Ovary (tissue), 10 donors: ENCODE measurements at regions of chr4 and their contacts with region 1.

Region 1: DNA sequence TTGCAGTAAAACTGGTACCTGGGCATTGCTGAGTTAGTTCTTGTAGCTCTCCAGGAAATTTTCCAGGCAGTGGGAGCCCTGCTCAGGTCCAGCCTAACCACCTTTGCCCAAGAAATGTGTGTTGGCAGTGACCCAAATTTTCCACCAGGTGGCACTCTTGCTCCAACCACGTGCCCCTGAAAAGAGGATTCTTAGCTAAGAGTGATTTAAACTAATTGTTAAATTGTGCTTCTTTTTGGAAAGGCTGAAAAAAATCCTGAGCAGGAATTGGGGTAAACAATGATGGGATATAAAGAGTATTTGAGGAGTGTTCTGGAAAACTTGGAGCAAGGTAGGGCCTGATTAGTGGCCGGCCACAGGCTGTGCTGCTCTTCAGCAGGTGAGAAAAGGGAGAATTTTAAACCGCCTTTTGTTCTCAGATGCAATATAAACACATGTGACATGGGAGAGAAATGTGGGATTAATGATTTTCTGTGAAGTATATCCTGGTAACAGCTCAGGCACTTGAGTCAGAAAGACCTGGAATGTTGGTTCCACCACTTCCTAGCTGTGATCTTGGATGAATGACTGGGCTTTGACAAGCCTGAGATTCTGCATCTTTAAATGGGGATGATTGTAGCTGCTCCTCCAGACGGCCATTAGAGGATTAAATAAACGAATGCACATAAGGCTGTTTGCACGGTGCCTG is 219.6 kb downstream of the PTTG2 start:
- DNase-seq: peak; percentile 60 to 77 (median 70)
- H3K4me3 ChIP-seq: no peak overlapping the region
- H3K27ac ChIP-seq: no peak overlapping the region
- H3K4me1 ChIP-seq: peaks cover 4% of the 10 kb centered on the region
- H3K27me3 ChIP-seq: no peaks in the 10 kb centered on the region
- CTCF ChIP-seq: peak; percentile 52 to 82 (median 66)
- EP300 ChIP-seq: no peak
- POLR2A ChIP-seq: no peak

Region 2: DNA sequence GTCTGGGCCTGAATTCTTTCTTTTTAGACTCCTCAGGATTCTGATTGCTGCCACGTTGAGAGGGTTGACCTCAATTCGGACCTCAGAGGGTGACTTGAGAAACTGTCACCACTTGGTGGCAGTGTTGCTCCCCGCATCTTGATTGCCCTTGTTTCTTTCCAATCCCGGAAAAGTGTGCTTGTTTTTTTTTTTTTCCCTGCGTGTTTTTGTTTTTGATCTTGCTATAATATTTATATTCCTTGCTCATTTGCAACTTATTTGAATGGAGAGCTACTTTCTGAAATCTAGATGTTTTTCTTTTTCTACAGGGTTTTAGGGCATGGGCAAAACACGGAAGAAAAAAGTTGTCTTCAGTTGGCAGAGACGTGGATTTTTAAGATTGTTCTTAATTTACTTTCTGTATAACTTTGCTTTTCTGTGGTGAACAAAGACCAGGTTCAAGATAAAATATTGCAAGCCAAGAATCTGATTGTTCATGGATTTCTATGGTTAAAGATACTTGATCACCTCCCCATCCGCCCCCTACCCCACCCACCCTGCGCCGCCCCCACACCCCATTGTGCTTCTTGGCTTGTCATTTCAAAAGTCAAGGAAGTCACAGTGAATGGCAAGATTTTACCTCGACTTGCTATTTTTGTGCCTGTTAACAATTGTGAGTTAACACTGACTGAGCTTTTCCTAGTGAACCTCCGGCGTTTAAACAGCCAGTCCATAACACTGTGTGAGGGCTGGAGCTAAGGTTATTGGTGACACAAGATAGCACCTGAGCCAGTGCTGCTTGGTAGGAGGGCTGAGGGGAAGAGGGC is 117.5 kb before region 1 on chr4:
- intact Hi-C with region 1: loop called in 2 of 4 experiments (anchors 5 to 10 kb)
- DNase-seq: peak; percentile 68 to 88 (median 84)
- H3K4me3 ChIP-seq: peak overlapping the region; percentile 25
- H3K27ac ChIP-seq: peak overlapping the region in 1 of 2 donors; percentile 47
- H3K4me1 ChIP-seq: peaks cover 3% of the 10 kb centered on the region
- H3K27me3 ChIP-seq: no peaks in the 10 kb centered on the region
- CTCF ChIP-seq: peak; percentile 61 to 78 (median 64)
- EP300 ChIP-seq: no peak
- POLR2A ChIP-seq: no peak

Region 3: DNA sequence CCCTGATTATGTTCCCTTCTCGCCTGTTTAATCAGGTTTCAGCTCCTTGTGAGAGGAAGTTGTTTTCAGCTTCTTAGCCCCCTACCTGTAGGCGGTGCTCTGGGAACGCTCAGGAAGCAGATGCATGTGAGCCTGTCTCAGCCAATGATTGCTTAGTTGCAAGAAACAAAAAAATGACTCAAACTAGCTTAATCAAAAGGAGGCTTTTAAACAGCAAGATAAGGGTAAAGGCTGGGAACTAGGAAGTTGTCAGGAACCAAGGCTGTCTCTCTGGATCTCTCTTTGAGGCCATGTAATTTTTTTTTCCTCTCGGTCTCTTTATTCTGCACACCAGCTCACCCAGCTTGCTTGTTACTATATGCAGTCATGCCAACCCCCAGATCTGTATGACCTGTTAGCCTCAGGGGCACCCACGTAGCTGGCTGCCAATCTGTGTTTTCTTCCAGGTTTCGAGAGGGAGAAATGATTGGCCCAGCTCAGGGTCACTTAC is 110.5 kb before region 1 on chr4:
- intact Hi-C with region 1: loop called in 2 of 4 experiments (anchors 5 to 10 kb)
- DNase-seq: peak; percentile 73 to 81 (median 78)
- H3K4me3 ChIP-seq: no peak overlapping the region
- H3K27ac ChIP-seq: peak overlapping the region; percentile 48 to 74
- H3K4me1 ChIP-seq: peaks cover 7% of the 10 kb centered on the region
- H3K27me3 ChIP-seq: no peaks in the 10 kb centered on the region
- CTCF ChIP-seq: peak; percentile 52 to 89 (median 75)
- EP300 ChIP-seq: no peak
- POLR2A ChIP-seq: no peak

Region 4: GRCh38 chr4:38319456-38320342 is 139.9 kb after region 1 on chr4:
- intact Hi-C with region 1: loop called in 2 of 4 experiments (anchors 10 kb)
- DNase-seq: peak; percentile 92 to 99 (median 98)
- H3K4me3 ChIP-seq: no peak overlapping the region
- H3K27ac ChIP-seq: peak overlapping the region; percentile 65 to 78
- H3K4me1 ChIP-seq: peaks cover 5% of the 10 kb centered on the region
- H3K27me3 ChIP-seq: no peaks in the 10 kb centered on the region
- CTCF ChIP-seq: peak; percentile 91 to 93 (median 92)
- EP300 ChIP-seq: no peak
- POLR2A ChIP-seq: no peak

Region 5: DNA sequence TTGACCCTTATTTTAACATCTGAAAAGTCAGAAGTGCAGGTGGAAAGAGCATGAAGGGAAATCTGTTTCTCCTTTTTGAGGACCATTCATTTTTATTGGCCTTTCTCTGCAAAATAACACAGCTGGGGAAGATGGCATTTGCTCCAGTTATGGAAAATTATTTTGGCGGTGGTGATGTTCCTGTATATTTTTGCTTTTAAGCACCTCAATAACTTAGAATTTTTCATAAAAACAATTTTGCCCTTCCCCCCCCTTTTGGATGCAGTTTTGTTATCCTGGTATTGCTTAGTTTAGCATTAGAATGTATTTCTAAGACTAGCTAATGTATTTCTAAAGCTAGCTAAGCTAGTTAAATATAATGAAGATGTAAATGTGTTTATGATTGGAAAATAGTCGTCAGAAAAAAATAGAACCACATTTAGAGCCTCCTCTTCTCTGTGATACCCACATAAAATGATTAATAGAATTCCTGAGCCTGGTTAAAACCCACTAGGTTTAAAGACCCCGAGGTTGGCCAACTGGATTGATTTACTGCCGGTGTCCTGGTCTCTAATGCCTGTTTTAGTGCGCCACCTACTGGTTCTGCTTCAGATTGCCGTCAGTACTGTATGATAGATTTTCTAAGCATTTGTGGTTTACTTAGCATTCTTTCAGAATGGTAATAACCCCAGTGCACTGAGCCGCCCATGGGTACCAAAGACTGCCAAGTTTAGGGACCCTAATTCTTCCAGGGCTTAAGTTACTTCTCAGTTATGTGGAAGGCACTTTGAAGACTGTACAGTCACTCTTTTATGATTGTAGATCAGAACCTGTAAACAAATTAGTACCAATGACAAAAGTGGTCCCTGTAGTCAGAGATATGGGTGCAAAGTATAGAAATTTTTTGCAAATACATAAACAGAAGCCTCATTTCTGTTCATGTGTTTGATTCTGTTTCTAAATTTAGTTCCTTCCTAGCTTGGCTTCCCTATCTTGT is 495.6 kb after region 1 on chr4:
- intact Hi-C with region 1: loop called (anchors 5 to 10 kb)
- DNase-seq: peak; percentile 72 to 87 (median 74)
- H3K4me3 ChIP-seq: no peak overlapping the region
- H3K27ac ChIP-seq: peak overlapping the region in 1 of 2 donors; percentile 84
- H3K4me1 ChIP-seq: peaks cover 35% of the 10 kb centered on the region
- H3K27me3 ChIP-seq: no peaks in the 10 kb centered on the region
- CTCF ChIP-seq: peak; percentile 80 to 91 (median 89)
- EP300 ChIP-seq: no peak
- POLR2A ChIP-seq: no peak

Region 6: GRCh38 chr4:38730830-38731646 is 551.2 kb after region 1 on chr4:
- intact Hi-C with region 1: loop called (anchors 2 to 10 kb)
- DNase-seq: peak; percentile 62 to 89 (median 83)
- H3K4me3 ChIP-seq: no peak overlapping the region
- H3K27ac ChIP-seq: no peak overlapping the region
- H3K4me1 ChIP-seq: peaks cover 1% of the 10 kb centered on the region
- H3K27me3 ChIP-seq: no peaks in the 10 kb centered on the region
- CTCF ChIP-seq: peak; percentile 83 to 89 (median 84)
- EP300 ChIP-seq: no peak
- POLR2A ChIP-seq: no peak

Region 7: DNA sequence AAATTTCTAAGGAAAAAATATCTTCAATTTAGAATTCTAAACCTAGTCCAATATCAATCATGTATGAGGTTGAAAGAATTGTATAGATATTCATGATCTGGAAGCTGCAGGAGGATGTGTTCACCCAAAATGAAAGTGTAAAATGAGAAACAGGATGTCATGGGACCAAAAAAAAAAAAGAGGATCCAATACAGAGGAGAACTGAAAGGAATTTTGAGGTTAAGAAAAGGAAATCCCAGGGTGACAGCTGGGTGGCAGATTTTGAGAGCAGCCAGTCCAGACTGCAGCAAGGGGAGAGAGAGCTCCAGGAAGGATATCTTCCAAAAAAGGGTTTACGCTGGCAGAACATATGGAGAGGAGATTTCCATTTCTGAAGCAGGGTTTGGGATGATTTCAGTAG is 564.0 kb after region 1 on chr4:
- intact Hi-C with region 1: loop called in 2 of 4 experiments (anchors 5 to 10 kb)
- DNase-seq: no peak
- H3K4me3 ChIP-seq: no peak overlapping the region
- H3K27ac ChIP-seq: no peak overlapping the region
- H3K4me1 ChIP-seq: peaks cover 1% of the 10 kb centered on the region
- H3K27me3 ChIP-seq: no peaks in the 10 kb centered on the region
- CTCF ChIP-seq: no peak
- EP300 ChIP-seq: no peak
- POLR2A ChIP-seq: no peak